ENCODE measurements at regions of chr6 and their contacts with region 1.

Region 1: GRCh38 chr6:142374965-142375733 is 73.3 kb downstream of the ADGRG6 start:
- DNase-seq: peak; percentile 85
- ATAC-seq: peak; percentile 61
- H3K4me3 ChIP-seq: peak overlapping the region in 1 of 2 experiments; percentile 37; a peak in 2 of 4 replicates
- H3K27ac ChIP-seq: peak overlapping the region; percentile 92
- H3K4me1 ChIP-seq: peaks cover 81 to 84% of the 10 kb centered on the region in 2 experiments
- H3K27me3 ChIP-seq: no peaks in the 10 kb centered on the region
- CTCF ChIP-seq: no peak
- POLR2A ChIP-seq: no peak
- RAD21 ChIP-seq: peak; percentile 12; the same call in 1 of the 2 replicates

Region 2: GRCh38 chr6:142301651-142302370 is 73.3 kb before region 1 on chr6 and contains the start of gene ADGRG6:
- CTCF ChIA-PET with region 1: no interaction called
- POLR2A ChIA-PET with region 1: no interaction called
- RAD21 ChIA-PET with region 1: no interaction called
- intact Hi-C with region 1: loop called (anchors 1 kb)
- DNase-seq: peak; percentile 57
- ATAC-seq: peak; percentile 84
- H3K4me3 ChIP-seq: peak within 1 kb of the TSS; percentile 66 to 74
- H3K27ac ChIP-seq: peak within 1 kb of the TSS; percentile 88
- H3K4me1 ChIP-seq: peaks cover 18 to 46% of the 10 kb centered on the region in 2 experiments
- H3K27me3 ChIP-seq: no peaks in the 10 kb centered on the region
- CTCF ChIP-seq: peak in 2 of 3 experiments; percentile 26 to 38; a peak in 3 of 6 replicates
- POLR2A ChIP-seq: peak; percentile 34
- RAD21 ChIP-seq: peak; percentile 47
- total RNA-seq, gene ADGRG6: 67.9 TPM